AG04449 (cell line): ENCODE measurements at regions of chr11 and their contacts with region 1.

Region 1: DNA sequence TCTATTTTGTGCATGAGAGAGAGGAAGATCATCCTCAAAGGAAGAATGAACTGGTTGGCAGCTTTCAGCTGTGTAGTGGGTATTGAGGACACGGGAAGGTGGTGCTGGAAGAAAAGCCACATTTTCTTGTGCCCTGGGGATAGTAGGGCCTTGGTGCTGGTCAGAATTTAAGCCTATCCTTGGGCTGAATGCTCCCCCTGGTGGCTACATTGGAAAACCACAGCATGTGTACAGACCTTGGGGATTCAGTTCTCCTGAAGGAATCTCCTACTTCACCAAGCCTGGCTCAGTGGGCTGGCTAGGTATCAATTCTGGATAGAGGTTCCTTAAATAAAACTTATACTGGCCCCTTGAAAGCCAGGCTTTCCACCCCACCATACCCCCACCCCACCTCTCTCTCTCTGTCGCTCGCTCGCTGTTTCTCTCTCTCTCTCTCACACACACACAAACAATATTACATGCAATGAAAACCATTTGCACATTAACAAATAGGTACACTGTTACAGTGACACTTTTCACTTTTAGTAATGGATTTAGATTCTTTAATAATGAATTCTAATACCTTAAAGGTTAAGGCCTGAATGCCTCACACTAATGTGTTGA is 2.8 kb upstream of the OR51M1 start:
- DNase-seq: no peak
- H3K4me3 ChIP-seq: no peak overlapping the region
- CTCF ChIP-seq: peak; percentile 87

Region 2: DNA sequence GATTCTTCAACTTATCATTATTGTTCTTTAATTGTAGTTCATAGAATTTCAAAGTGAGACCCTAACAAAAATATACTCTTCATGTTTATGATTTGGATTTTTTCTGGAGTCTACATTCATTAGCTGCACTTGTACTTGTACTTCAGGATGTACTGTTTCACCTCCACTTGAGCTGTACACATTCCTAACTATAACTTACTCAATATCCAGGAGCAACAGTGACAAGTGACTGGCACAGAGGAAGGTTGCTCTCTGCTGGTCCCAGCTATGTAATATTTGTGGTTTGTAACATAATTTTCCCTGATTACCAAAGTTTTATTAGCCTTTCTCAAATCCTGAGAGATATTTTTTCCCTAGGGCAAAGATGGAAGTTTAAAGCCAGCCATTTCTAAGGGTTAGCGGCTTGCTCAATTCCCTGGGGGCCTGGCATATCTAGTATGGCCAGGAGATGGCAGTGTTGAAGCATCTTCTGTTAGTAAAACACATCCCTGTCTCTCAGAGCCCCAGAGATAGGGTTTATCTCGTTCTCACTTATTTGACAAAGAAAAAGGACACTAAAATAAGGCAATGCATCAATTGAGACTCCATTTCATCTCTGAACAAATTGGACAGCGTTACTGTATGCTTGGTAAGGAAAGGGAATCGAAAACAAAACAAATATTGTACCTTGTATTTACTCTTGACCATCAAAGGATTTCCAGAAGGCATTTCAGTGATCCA is 256.9 kb before region 1 on chr11:
- CTCF ChIA-PET with region 1: interaction called, 56 read pairs
- POLR2A ChIA-PET with region 1: no interaction called
- DNase-seq: peak; percentile 28
- H3K4me3 ChIP-seq: no peak overlapping the region
- CTCF ChIP-seq: peak; percentile 78

Region 3: GRCh38 chr11:5197536-5197935 is 183.3 kb before region 1 on chr11:
- CTCF ChIA-PET with region 1: interaction called, 27 read pairs
- POLR2A ChIA-PET with region 1: no interaction called
- DNase-seq: peak; percentile 33
- H3K4me3 ChIP-seq: no peak overlapping the region
- CTCF ChIP-seq: no peak

Region 4: DNA sequence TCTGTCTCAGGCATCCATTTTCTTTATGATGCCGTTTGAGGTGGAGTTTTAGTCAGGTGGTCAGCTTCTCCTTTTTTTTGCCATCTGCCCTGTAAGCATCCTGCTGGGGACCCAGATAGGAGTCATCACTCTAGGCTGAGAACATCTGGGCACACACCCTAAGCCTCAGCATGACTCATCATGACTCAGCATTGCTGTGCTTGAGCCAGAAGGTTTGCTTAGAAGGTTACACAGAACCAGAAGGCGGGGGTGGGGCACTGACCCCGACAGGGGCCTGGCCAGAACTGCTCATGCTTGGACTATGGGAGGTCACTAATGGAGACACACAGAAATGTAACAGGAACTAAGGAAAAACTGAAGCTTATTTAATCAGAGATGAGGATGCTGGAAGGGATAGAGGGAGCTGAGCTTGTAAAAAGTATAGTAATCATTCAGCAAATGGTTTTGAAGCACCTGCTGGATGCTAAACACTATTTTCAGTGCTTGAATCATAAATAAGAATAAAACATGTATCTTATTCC is 100.2 kb before region 1 on chr11:
- CTCF ChIA-PET with region 1: no interaction called
- POLR2A ChIA-PET with region 1: no interaction called
- DNase-seq: peak; percentile 85
- H3K4me3 ChIP-seq: no peak overlapping the region
- CTCF ChIP-seq: no peak

Region 5: GRCh38 chr11:5910540-5910939 is 529.7 kb after region 1 on chr11:
- CTCF ChIA-PET with region 1: no interaction called
- POLR2A ChIA-PET with region 1: no interaction called
- DNase-seq: no peak
- H3K4me3 ChIP-seq: no peak overlapping the region
- CTCF ChIP-seq: no peak